Activated CD4-positive, alpha-beta T cell treated with anti-CD3 and anti-CD28 coated beads for 36 hours (primary cell): ENCODE measurements at regions of chr15 and their contacts with region 1.

Region 1: GRCh38 chr15:60585743-60586708 is 107.1 kb upstream of the ICE2 start:
- DNase-seq: peak; percentile 68
- ATAC-seq: no peak
- H3K4me3 Mint-ChIP-seq: peak overlapping the region; percentile 30
- H3K27ac Mint-ChIP-seq: peak overlapping the region; percentile 87
- H3K4me1 Mint-ChIP-seq: peaks cover 85% of the 10 kb centered on the region
- H3K27me3 Mint-ChIP-seq: no peaks in the 10 kb centered on the region

Region 2: GRCh38 chr15:59917504-59918157 is 668.4 kb before region 1 on chr15:
- CTCF ChIA-PET with region 1: no interaction called
- POLR2A ChIA-PET with region 1: no interaction called
- intact Hi-C with region 1: loop called in 1 of 2 experiments (anchors 5 kb)
- DNase-seq: peak; percentile 87
- ATAC-seq: peak; percentile 61
- H3K4me3 Mint-ChIP-seq: no peak overlapping the region
- H3K27ac Mint-ChIP-seq: peak overlapping the region; percentile 58
- H3K4me1 Mint-ChIP-seq: peaks cover 28% of the 10 kb centered on the region
- H3K27me3 Mint-ChIP-seq: peaks cover 11% of the 10 kb centered on the region

Region 3: DNA sequence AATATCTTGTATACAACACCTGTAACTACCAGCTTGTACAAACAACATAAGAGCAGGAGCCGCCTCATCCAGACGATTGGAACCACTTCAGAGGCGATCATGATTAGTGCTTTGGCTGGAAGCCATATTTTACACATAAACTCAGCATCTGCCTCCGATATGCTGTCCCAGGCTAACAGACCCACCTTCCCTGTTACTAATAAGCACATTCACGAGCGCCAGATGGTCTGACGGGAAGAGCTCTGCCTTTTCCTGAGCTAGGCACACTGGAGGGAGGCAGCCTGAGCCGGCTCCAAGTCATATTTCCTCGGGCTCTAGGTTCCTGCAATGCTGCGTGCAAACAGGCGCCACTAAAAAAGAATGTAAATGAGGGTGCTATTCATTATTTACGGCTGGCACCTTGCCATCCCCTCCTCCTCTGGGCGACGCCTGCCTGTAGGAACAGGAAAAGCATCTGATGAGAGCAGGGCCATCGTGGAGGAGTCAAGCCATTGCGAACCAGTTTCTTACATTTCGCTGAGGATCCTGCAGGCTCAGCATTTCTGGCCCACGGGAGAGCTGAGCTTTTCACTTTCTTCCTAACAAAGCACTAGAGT is 286.5 kb before region 1 on chr15:
- CTCF ChIA-PET with region 1: no interaction called
- POLR2A ChIA-PET with region 1: no interaction called
- intact Hi-C with region 1: no loop called
- DNase-seq: no peak
- ATAC-seq: no peak
- H3K4me3 Mint-ChIP-seq: no peak overlapping the region
- H3K27ac Mint-ChIP-seq: no peak overlapping the region
- H3K4me1 Mint-ChIP-seq: no peaks in the 10 kb centered on the region
- H3K27me3 Mint-ChIP-seq: peaks cover 3% of the 10 kb centered on the region

Region 4: DNA sequence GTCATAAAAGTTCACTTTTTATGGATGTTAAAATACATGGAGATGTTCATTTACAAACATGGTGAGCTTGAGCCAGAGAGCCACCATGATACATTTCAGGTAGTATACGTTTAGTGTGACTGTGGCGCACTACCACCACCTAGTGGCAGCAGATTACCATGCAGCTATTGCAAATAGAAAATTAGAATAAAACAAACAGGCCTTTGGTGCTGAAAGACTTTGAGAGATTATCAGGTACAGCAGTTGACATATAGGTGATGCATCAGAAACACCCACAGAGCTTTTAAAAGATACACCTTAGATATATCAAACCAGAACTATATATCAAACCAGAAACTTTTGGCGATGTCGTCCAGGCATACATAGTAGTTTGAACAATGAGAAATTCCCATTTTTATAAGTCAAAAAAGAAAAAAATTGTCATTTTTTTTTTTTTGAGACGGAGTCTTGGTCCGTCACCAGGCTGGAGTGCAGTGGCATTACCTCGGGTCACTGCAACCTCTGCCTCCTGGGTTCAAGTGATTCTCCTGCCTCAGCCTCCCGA is 65.1 kb before region 1 on chr15:
- CTCF ChIA-PET with region 1: interaction called, 38 read pairs
- POLR2A ChIA-PET with region 1: interaction called, 3 read pairs
- intact Hi-C with region 1: loop called in 1 of 2 experiments (anchors 2 kb)
- DNase-seq: peak; percentile 90
- ATAC-seq: peak; percentile 68
- H3K4me3 Mint-ChIP-seq: no peak overlapping the region
- H3K27ac Mint-ChIP-seq: peak overlapping the region; percentile 41
- H3K4me1 Mint-ChIP-seq: peaks cover 45% of the 10 kb centered on the region
- H3K27me3 Mint-ChIP-seq: no peaks in the 10 kb centered on the region

Region 5: DNA sequence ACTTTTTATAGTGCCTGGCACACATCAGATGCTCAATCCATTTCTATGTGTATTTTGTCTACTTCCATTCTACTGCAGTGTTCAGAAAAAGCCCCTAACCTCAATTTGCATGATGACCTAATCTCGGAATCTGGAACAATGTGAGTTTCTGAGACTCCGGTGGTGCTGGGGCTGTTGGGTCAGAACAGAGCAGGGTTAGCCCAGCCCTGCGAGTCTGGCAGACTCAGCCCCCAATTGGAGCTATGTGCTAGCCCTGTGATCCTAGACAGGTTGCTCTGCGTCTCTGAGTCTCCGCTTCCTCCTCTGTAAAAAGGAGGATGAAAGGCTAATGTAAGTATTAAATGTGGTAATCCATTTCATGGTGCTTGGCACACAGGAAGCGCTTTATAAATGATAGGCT is 12.1 kb before region 1 on chr15:
- CTCF ChIA-PET with region 1: interaction called, 82 read pairs
- POLR2A ChIA-PET with region 1: interaction called, 8 read pairs
- intact Hi-C with region 1: loop called in 1 of 2 experiments (anchors 1 kb)
- DNase-seq: peak; percentile 70
- ATAC-seq: peak; percentile 68
- H3K4me3 Mint-ChIP-seq: peak overlapping the region; percentile 58
- H3K27ac Mint-ChIP-seq: peak overlapping the region; percentile 96
- H3K4me1 Mint-ChIP-seq: peaks cover 88% of the 10 kb centered on the region
- H3K27me3 Mint-ChIP-seq: no peaks in the 10 kb centered on the region

Region 6: GRCh38 chr15:60787837-60788691 is 202.0 kb after region 1 on chr15:
- CTCF ChIA-PET with region 1: interaction called, 10 read pairs
- POLR2A ChIA-PET with region 1: no interaction called
- intact Hi-C with region 1: no loop called
- DNase-seq: peak; percentile 70
- ATAC-seq: peak; percentile 81
- H3K4me3 Mint-ChIP-seq: peak overlapping the region; percentile 5
- H3K27ac Mint-ChIP-seq: peak overlapping the region; percentile 52
- H3K4me1 Mint-ChIP-seq: peaks cover 59% of the 10 kb centered on the region
- H3K27me3 Mint-ChIP-seq: no peaks in the 10 kb centered on the region

Region 7: DNA sequence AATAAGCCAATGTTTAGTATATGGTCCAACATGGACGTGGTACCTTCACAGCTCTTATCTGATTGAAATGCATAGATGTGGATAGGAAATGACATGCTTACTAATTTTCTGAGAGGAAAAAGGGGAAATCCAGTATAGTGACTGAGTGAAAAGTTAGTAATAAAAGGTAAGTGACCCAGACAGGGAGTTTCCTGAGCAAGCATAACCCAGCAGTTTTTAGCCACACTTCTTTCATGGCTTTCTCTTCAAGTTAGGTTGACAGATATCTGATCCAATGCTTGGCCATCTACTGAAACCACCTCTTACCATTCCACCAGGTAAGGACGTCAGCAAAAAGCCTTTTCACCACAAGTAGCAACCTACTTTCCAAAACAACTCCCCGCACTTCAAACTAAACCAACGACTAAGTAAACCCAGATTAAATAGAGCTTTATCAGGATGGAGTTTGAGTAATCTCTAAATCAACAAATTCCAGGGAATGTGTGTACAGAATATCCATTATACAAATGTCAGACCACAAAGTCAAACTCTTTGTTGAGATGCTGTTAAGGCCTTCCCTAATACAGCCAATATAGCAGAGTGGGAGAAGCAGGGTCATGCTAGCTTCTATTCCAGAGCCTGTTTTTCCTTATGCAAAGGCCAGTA is 313.4 kb after region 1 on chr15:
- CTCF ChIA-PET with region 1: interaction called, 19 read pairs
- POLR2A ChIA-PET with region 1: interaction called, 15 read pairs
- intact Hi-C with region 1: loop called (anchors 2 to 5 kb)
- DNase-seq: peak; percentile 42
- ATAC-seq: peak; percentile 85
- H3K4me3 Mint-ChIP-seq: no peak overlapping the region
- H3K27ac Mint-ChIP-seq: peak overlapping the region; percentile 66
- H3K4me1 Mint-ChIP-seq: peaks cover 53% of the 10 kb centered on the region
- H3K27me3 Mint-ChIP-seq: peaks cover 6% of the 10 kb centered on the region

Region 8: GRCh38 chr15:61834076-61834697 is 1248.2 kb after region 1 on chr15:
- CTCF ChIA-PET with region 1: interaction called, 4 read pairs
- POLR2A ChIA-PET with region 1: no interaction called
- intact Hi-C with region 1: loop called in 1 of 2 experiments (anchors 10 kb)
- DNase-seq: peak; percentile 85
- ATAC-seq: peak; percentile 74
- H3K4me3 Mint-ChIP-seq: no peak overlapping the region
- H3K27ac Mint-ChIP-seq: no peak overlapping the region
- H3K4me1 Mint-ChIP-seq: peaks cover 2% of the 10 kb centered on the region
- H3K27me3 Mint-ChIP-seq: peaks cover 19% of the 10 kb centered on the region